GM12878 (cell line): ENCODE measurements at regions of chr20 and their contacts with region 1.

Region 1: GRCh38 chr20:59032023-59032712 is at the start of gene ATP5F1E:
- DNase-seq: peak; percentile 75
- ATAC-seq: peak; percentile 97
- H3K4me3 ChIP-seq: peak within 1 kb of the TSS; percentile 85
- H3K27ac ChIP-seq: peak within 1 kb of the TSS; percentile 90
- H3K4me1 ChIP-seq: no peaks in the 10 kb centered on the region; the same call in 1 of the 2 replicates
- H3K27me3 ChIP-seq: no peaks in the 10 kb centered on the region
- CTCF ChIP-seq: no peak
- EP300 ChIP-seq: peak in 1 of 2 experiments; percentile 48; a peak in 2 of 4 replicates
- POLR2A ChIP-seq: peak; percentile 98
- RAD21 ChIP-seq: no peak
- polyA plus RNA-seq, gene ATP5F1E: 169 to 219 TPM

Region 2: DNA sequence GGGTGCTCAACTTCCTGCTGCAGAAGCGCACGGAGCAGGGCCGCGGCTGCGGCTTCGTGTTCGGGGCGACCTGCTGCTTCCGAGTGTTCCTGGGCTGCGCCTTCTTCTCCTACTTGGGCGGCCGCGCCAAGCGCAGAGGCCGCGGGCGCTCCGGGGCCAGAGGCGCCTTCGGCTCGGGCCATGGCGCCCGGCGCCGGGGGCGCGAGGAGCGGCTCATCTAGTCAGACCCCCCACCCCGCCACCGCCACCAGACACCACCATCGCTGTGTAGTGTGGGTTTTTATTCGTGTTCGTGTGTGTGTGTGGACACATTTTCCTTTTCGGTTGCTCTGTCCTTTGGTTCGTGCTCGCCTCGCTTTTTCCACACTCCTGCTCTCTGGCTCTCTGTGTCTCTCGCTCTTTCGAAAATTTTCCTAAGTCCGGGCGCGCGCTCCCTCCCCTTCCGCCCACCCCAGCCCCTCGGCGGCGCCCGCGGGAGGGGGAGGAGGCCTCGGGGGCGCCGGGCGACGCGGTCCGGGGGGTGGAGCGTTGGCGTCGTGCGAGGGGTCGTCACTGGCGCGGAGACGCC is 141.6 kb before region 1 on chr20:
- CTCF ChIA-PET with region 1: no interaction called
- POLR2A ChIA-PET with region 1: interaction called, 5 read pairs
- RAD21 ChIA-PET with region 1: interaction called, 3 read pairs
- SMC1A ChIA-PET with region 1: interaction called, 3 read pairs
- in situ Hi-C with region 1: no loop called
- intact Hi-C with region 1: loop called (anchors 2 kb)
- DNase-seq: no peak
- ATAC-seq: peak; percentile 50
- H3K4me3 ChIP-seq: peak overlapping the region; percentile 76
- H3K27ac ChIP-seq: peak overlapping the region; percentile 87
- H3K4me1 ChIP-seq: peaks cover 30% of the 10 kb centered on the region
- H3K27me3 ChIP-seq: no peaks in the 10 kb centered on the region
- CTCF ChIP-seq: no peak
- EP300 ChIP-seq: no peak
- POLR2A ChIP-seq: peak; percentile 72
- RAD21 ChIP-seq: no peak

Region 3: DNA sequence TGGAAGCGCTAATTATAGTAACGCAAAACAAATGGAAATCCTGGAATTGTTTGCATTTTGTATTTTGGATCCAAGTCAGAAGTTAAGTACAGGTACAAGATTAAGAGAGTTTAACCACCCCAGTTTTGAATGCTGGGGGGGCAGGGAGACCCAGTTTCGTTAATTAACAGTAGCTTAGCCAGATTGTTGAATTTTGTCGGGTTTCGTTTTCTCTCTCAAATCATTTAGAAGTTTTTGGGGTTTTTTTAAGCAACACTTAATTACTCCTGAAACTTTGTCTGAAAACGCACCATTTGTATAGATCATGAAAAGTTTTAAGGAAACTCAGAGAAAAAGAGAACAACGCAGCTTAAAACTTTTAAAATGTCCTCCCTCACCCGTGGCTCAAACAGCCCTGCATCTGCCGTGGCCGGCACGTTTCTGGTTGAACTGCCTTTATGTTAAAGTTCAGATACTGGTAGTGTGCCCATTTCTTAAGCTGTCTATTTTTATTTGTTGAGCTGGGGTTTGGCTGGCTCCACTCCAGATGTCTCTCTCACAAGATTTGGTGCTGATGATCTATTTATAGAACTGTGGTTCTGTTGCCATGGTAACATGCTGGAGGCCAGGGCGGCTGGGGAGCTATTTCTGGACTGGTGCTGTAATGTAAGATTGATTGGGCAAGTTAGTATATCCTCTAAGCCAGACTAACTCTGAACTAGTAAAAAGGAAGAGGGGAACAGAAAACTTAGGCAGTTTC is 124.6 kb before region 1 on chr20:
- CTCF ChIA-PET with region 1: interaction called, 5 read pairs
- POLR2A ChIA-PET with region 1: interaction called, 19 read pairs
- RAD21 ChIA-PET with region 1: interaction called, 12 read pairs
- SMC1A ChIA-PET with region 1: interaction called, 8 read pairs
- in situ Hi-C with region 1: no loop called
- intact Hi-C with region 1: loop called (anchors 5 kb)
- DNase-seq: peak; percentile 98
- ATAC-seq: peak; percentile 88
- H3K4me3 ChIP-seq: peak overlapping the region; percentile 67
- H3K27ac ChIP-seq: peak overlapping the region; percentile 96
- H3K4me1 ChIP-seq: peaks cover 54% of the 10 kb centered on the region
- H3K27me3 ChIP-seq: no peaks in the 10 kb centered on the region
- CTCF ChIP-seq: no peak
- EP300 ChIP-seq: peak; percentile 57 to 85
- POLR2A ChIP-seq: peak; percentile 71
- RAD21 ChIP-seq: no peak; the same call in 1 of the 2 replicates

Region 4: DNA sequence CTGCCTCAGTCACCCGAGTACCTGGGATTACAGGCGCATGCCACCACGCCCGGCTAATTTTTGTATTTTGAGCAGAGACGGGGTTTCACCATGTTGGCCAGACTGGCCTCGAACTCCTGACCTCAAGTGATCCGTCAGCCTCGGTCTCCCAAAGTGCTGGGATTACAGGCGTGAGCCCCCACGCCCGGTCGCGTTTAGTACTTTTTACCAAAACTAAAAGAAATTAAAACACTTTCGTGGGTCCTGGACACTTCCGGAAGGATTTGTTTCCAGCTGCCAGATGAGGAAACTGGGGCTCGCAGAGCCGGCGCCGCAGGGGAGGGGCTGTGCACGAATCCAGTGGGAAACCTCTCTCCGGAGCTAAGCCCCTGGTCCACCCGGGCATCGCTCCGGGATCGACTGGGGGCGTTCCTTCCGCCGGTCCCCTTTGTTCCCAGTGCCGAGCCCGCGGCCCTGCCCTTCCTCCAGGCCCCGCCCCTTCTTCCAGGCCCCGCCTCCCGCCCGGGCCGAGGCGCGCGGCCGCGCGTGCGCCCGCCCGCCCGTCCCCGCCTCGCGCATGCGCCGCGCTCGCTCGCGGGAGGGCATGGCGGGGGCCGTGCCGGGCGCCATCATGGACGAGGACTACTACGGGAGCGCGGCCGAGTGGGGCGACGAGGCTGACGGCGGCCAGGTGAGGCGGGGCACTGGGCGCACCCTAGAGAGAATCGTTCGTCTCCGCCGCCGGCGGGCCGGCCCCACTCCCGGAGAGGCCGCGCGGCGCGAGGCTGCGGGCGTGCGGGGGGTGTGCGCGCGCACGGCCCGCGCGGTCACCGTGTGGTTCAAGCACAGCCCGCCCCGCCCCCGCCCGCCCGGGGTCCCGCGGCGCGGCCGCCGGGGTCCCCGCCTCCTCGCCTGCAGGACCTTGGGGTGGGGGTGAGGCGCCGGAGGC is 51.2 kb before region 1 on chr20 and contains the start of gene NELFCD:
- CTCF ChIA-PET with region 1: interaction called, 3 read pairs
- POLR2A ChIA-PET with region 1: interaction called, 13 read pairs
- RAD21 ChIA-PET with region 1: interaction called, 19 read pairs
- SMC1A ChIA-PET with region 1: interaction called, 9 read pairs
- in situ Hi-C with region 1: no loop called
- intact Hi-C with region 1: loop called (anchors 10 kb)
- DNase-seq: no peak
- ATAC-seq: peak; percentile 68
- H3K4me3 ChIP-seq: peak within 1 kb of the TSS; percentile 99
- H3K27ac ChIP-seq: peak within 1 kb of the TSS; percentile 87
- H3K4me1 ChIP-seq: peaks cover 38% of the 10 kb centered on the region
- H3K27me3 ChIP-seq: no peaks in the 10 kb centered on the region
- CTCF ChIP-seq: no peak
- EP300 ChIP-seq: no peak
- POLR2A ChIP-seq: peak; percentile 91
- RAD21 ChIP-seq: no peak
- polyA plus RNA-seq, gene NELFCD: 8.9 to 16.7 TPM

Region 5: GRCh38 chr20:59006864-59007664 is 25.1 kb before region 1 on chr20 and contains the start of gene CTSZ:
- CTCF ChIA-PET with region 1: interaction called, 4 read pairs
- POLR2A ChIA-PET with region 1: interaction called, 15 read pairs
- RAD21 ChIA-PET with region 1: interaction called, 15 read pairs
- SMC1A ChIA-PET with region 1: interaction called, 22 read pairs
- in situ Hi-C with region 1: no loop called
- intact Hi-C with region 1: loop called (anchors 1 kb)
- DNase-seq: no peak
- ATAC-seq: peak; percentile 52
- H3K4me3 ChIP-seq: peak within 1 kb of the TSS; percentile 92
- H3K27ac ChIP-seq: peak within 1 kb of the TSS; percentile 95
- H3K4me1 ChIP-seq: peaks cover 35% of the 10 kb centered on the region
- H3K27me3 ChIP-seq: no peaks in the 10 kb centered on the region
- CTCF ChIP-seq: no peak
- EP300 ChIP-seq: no peak
- POLR2A ChIP-seq: peak; percentile 70
- RAD21 ChIP-seq: no peak
- polyA plus RNA-seq, gene CTSZ: 6.0 to 14.0 TPM

Region 6: GRCh38 chr20:59016795-59017492 is 15.2 kb before region 1 on chr20:
- CTCF ChIA-PET with region 1: no interaction called
- POLR2A ChIA-PET with region 1: interaction called, 3 read pairs
- RAD21 ChIA-PET with region 1: interaction called, 11 read pairs
- SMC1A ChIA-PET with region 1: interaction called, 9 read pairs
- in situ Hi-C with region 1: no loop called
- intact Hi-C with region 1: no loop called
- DNase-seq: no peak
- ATAC-seq: peak; percentile 59
- H3K4me3 ChIP-seq: no peak overlapping the region
- H3K27ac ChIP-seq: 0 out of 2 replicates have a peak overlapping the region, but pooled peaks have one; percentile 3
- H3K4me1 ChIP-seq: peaks cover 11% of the 10 kb centered on the region
- H3K27me3 ChIP-seq: no peaks in the 10 kb centered on the region
- CTCF ChIP-seq: no peak
- EP300 ChIP-seq: no peak
- POLR2A ChIP-seq: no peak
- RAD21 ChIP-seq: no peak

Region 7: DNA sequence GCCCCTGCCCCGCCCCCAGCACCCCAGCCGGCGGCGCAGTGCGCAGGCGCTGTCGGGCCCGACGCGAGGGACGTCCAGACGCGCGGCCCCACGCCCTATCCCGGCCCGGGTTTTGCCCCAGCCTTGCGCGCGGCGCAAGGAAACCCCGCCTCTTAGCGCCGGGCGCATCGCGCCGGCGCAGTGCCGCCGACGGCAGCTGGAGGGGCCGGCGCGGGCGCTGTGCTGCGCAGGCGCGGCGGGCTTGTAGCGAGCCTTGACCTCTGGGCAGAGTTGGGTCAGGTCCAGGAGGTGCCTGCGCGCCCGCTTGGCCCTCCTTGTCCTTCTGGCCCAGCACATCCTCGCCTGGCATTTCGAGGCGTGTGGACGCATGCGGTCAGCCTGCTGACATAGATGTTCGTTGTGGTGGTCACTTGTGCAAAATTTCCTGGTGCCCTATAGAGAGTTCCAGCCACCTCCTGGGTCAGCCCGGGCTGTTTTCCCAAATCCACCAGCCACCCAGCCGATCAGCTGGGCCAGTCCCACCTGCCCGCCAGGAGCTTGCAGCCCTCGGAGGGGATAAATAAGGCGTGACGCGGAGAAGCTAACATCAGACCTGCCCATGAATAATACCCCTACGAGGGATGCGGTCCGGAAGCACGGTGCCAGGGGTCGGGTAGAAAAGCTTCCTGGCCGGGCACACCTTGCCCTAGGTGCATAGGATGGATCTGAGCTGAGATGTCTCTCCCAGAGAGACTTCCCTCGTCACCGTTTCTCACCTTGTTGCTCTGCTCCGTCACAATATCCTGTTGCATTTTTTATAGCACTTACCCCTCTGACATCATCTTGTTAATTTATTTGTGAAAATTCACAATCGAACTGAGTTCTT is 10.9 kb after region 1 on chr20:
- CTCF ChIA-PET with region 1: interaction called, 4 read pairs
- POLR2A ChIA-PET with region 1: interaction called, 40 read pairs
- RAD21 ChIA-PET with region 1: interaction called, 6 read pairs
- SMC1A ChIA-PET with region 1: interaction called, 12 read pairs
- in situ Hi-C with region 1: no loop called
- intact Hi-C with region 1: no loop called
- DNase-seq: peak; percentile 61
- ATAC-seq: peak; percentile 96
- H3K4me3 ChIP-seq: peak overlapping the region; percentile 89
- H3K27ac ChIP-seq: peak overlapping the region; percentile 87
- H3K4me1 ChIP-seq: peaks cover 13% of the 10 kb centered on the region
- H3K27me3 ChIP-seq: no peaks in the 10 kb centered on the region
- CTCF ChIP-seq: no peak
- EP300 ChIP-seq: no peak
- POLR2A ChIP-seq: peak; percentile 78
- RAD21 ChIP-seq: no peak

Region 8: GRCh38 chr20:59063358-59064213 is 31.4 kb after region 1 on chr20:
- CTCF ChIA-PET with region 1: no interaction called
- POLR2A ChIA-PET with region 1: no interaction called
- RAD21 ChIA-PET with region 1: no interaction called
- SMC1A ChIA-PET with region 1: no interaction called
- in situ Hi-C with region 1: no loop called
- intact Hi-C with region 1: no loop called
- DNase-seq: no peak
- ATAC-seq: no peak
- H3K4me3 ChIP-seq: no peak overlapping the region
- H3K27ac ChIP-seq: no peak overlapping the region
- H3K4me1 ChIP-seq: no peaks in the 10 kb centered on the region
- H3K27me3 ChIP-seq: no peaks in the 10 kb centered on the region; a peak in 2 of 4 replicates
- CTCF ChIP-seq: no peak
- EP300 ChIP-seq: no peak
- POLR2A ChIP-seq: no peak
- RAD21 ChIP-seq: no peak